CD8-positive, alpha-beta T cell (primary cell): ENCODE measurements at regions of chr5 and their contacts with region 1.

Region 1: GRCh38 chr5:142929587-142929986 is 159.4 kb downstream of the ARHGAP26 start:
- DNase-seq: peak in 8 of 9 experiments; percentile 11 to 87 (median 44)
- ATAC-seq: peak; percentile 77
- H3K4me3 ChIP-seq: no peak overlapping the region
- H3K4me3 Mint-ChIP-seq: no peak overlapping the region
- H3K27ac ChIP-seq: peak overlapping the region; percentile 27 to 72
- H3K27ac Mint-ChIP-seq: peak overlapping the region; percentile 90
- H3K4me1 ChIP-seq: peaks cover 13% of the 10 kb centered on the region
- H3K4me1 Mint-ChIP-seq: peaks cover 53% of the 10 kb centered on the region
- H3K27me3 ChIP-seq: no peaks in the 10 kb centered on the region
- H3K27me3 Mint-ChIP-seq: no peaks in the 10 kb centered on the region
- CTCF ChIP-seq: no peak

Region 2: GRCh38 chr5:142977363-142978051 is 47.9 kb after region 1 on chr5:
- CTCF ChIA-PET with region 1: no interaction called
- POLR2A ChIA-PET with region 1: no interaction called
- intact Hi-C with region 1: loop called in 1 of 2 experiments (anchors 2 kb)
- DNase-seq: peak; percentile 22 to 93 (median 60)
- ATAC-seq: peak; percentile 94
- H3K4me3 ChIP-seq: no peak overlapping the region
- H3K4me3 Mint-ChIP-seq: peak overlapping the region; percentile 59
- H3K27ac ChIP-seq: peak overlapping the region; percentile 3 to 88
- H3K27ac Mint-ChIP-seq: peak overlapping the region; percentile 83
- H3K4me1 ChIP-seq: peaks cover 57% of the 10 kb centered on the region
- H3K4me1 Mint-ChIP-seq: peaks cover 80% of the 10 kb centered on the region
- H3K27me3 ChIP-seq: no peaks in the 10 kb centered on the region
- H3K27me3 Mint-ChIP-seq: no peaks in the 10 kb centered on the region
- CTCF ChIP-seq: no peak

Region 3: GRCh38 chr5:143041972-143042770 is 112.6 kb after region 1 on chr5:
- CTCF ChIA-PET with region 1: no interaction called
- POLR2A ChIA-PET with region 1: no interaction called
- intact Hi-C with region 1: no loop called
- DNase-seq: no peak
- ATAC-seq: no peak
- H3K4me3 ChIP-seq: no peak overlapping the region
- H3K4me3 Mint-ChIP-seq: no peak overlapping the region
- H3K27ac ChIP-seq: no peak overlapping the region
- H3K27ac Mint-ChIP-seq: no peak overlapping the region
- H3K4me1 ChIP-seq: no peaks in the 10 kb centered on the region
- H3K4me1 Mint-ChIP-seq: peaks cover 2% of the 10 kb centered on the region
- H3K27me3 ChIP-seq: no peaks in the 10 kb centered on the region
- H3K27me3 Mint-ChIP-seq: no peaks in the 10 kb centered on the region
- CTCF ChIP-seq: no peak

Region 4: GRCh38 chr5:143448518-143448917 is 518.9 kb after region 1 on chr5:
- CTCF ChIA-PET with region 1: no interaction called
- POLR2A ChIA-PET with region 1: no interaction called
- intact Hi-C with region 1: no loop called
- DNase-seq: peak in 2 of 9 experiments; percentile 27 to 39
- ATAC-seq: peak; percentile 67
- H3K4me3 ChIP-seq: no peak overlapping the region
- H3K4me3 Mint-ChIP-seq: no peak overlapping the region
- H3K27ac ChIP-seq: no peak overlapping the region
- H3K27ac Mint-ChIP-seq: no peak overlapping the region
- H3K4me1 ChIP-seq: no peaks in the 10 kb centered on the region
- H3K4me1 Mint-ChIP-seq: peaks cover 9% of the 10 kb centered on the region
- H3K27me3 ChIP-seq: no peaks in the 10 kb centered on the region
- H3K27me3 Mint-ChIP-seq: no peaks in the 10 kb centered on the region
- CTCF ChIP-seq: no peak

Region 5: GRCh38 chr5:144800169-144800568 is 1870.6 kb after region 1 on chr5:
- CTCF ChIA-PET with region 1: no interaction called
- POLR2A ChIA-PET with region 1: no interaction called
- intact Hi-C with region 1: no loop called
- DNase-seq: no peak
- ATAC-seq: no peak
- H3K4me3 ChIP-seq: no peak overlapping the region
- H3K4me3 Mint-ChIP-seq: no peak overlapping the region
- H3K27ac ChIP-seq: no peak overlapping the region
- H3K27ac Mint-ChIP-seq: no peak overlapping the region
- H3K4me1 ChIP-seq: no peaks in the 10 kb centered on the region
- H3K4me1 Mint-ChIP-seq: no peaks in the 10 kb centered on the region
- H3K27me3 ChIP-seq: no peaks in the 10 kb centered on the region
- H3K27me3 Mint-ChIP-seq: no peaks in the 10 kb centered on the region
- CTCF ChIP-seq: no peak